ENCODE measurements at regions of chr14 and their contacts with region 1.

Region 1: GRCh38 chr14:52043690-52044089 is 25.2 kb downstream of the NID2 start:
- DNase-seq: peak in 1 of 2 experiments; percentile 72
- H3K4me3 ChIP-seq: no peak overlapping the region
- H3K27ac ChIP-seq: no peak overlapping the region
- H3K4me1 ChIP-seq: peaks cover 0 to 2% (median under 1%) of the 10 kb centered on the region in 4 experiments; a peak in 2 of 7 replicates
- H3K27me3 ChIP-seq: no peaks in the 10 kb centered on the region
- CTCF ChIP-seq: peak; percentile 82 to 95 (median 90)
- EP300 ChIP-seq: no peak
- POLR2A ChIP-seq: no peak
- RAD21 ChIP-seq: peak; percentile 76 to 81

Region 2: DNA sequence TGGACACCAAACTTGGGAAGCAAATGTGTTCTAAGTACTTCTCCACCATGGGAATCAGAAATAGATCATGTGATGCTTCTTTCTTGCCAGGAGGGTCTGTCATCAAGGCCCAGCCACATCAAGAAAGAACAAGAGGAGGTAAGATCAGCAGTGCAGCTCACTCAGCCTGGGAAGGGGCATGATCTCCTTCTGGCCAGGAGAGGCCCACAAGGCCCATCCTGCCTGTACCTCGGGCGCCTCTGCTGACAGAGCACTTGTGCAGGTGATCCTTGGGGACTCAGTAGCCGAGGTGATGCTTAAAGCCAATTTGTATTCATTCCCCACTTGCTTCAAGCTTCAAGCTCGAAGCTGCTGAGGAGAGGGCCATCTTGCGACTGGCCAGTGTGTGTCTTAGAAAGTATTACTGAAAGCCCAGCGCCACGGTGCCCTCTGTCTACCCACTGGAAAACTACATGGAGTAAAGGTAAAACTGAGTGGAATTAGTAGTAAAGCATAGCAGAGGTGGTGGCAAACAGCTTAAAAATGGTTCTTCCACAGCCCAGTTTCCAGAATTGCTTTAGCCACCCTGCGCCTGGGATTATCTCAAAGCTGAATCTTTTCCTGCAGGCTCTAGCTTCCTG is 28.2 kb before region 1 on chr14:
- CTCF ChIA-PET with region 1: interaction called, 33 read pairs
- POLR2A ChIA-PET with region 1: no interaction called
- DNase-seq: peak in 1 of 2 experiments; percentile 61
- H3K4me3 ChIP-seq: no peak overlapping the region
- H3K27ac ChIP-seq: no peak overlapping the region
- H3K4me1 ChIP-seq: peaks cover 2 to 12% (median 11%) of the 10 kb centered on the region in 4 experiments; a peak in 6 of 7 replicates
- H3K27me3 ChIP-seq: no peaks in the 10 kb centered on the region
- CTCF ChIP-seq: peak; percentile 37 to 73 (median 55)
- EP300 ChIP-seq: no peak
- POLR2A ChIP-seq: no peak
- RAD21 ChIP-seq: peak; percentile 52 to 56

Region 3: GRCh38 chr14:52031781-52032180 is 11.9 kb before region 1 on chr14:
- CTCF ChIA-PET with region 1: interaction called, 11 read pairs
- POLR2A ChIA-PET with region 1: interaction called, 3 read pairs
- DNase-seq: no peak
- H3K4me3 ChIP-seq: no peak overlapping the region
- H3K27ac ChIP-seq: no peak overlapping the region
- H3K4me1 ChIP-seq: no peaks in the 10 kb centered on the region; a peak in 1 of 7 replicates
- H3K27me3 ChIP-seq: no peaks in the 10 kb centered on the region
- CTCF ChIP-seq: no peak
- EP300 ChIP-seq: no peak
- POLR2A ChIP-seq: no peak
- RAD21 ChIP-seq: no peak

Region 4: DNA sequence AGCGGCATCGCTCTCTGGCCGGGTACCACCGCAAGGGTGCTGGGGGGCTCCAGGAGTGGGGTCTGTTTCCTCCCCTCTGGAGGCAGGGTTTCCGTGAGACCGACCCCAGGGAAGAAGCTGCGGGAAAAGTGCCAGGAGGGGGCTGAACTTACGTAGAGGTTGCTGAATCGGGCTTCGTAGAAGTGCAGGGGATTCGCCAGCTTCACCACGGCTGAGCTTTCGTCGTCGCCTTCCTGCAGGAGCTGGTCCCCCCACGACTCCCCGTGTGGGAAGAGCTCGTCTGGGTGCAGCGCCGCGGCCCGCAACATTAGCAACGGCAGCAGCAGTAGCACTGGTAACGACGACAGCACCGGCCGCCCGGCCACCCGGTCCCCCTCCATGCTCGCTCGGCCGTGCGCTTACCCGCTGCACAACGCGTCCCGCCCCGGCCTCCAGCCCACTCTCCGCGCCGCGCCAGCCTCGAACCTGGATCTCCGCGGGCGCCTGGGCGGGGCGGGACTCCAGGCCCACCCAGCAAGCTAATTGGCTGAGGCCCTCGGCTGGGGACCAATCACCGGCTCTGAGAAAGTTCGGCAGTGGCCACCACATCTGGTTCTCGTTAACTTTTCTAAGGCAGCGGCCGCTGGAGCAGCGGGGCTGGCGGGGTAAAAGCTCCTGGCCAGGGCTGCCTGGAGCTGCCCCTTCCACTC is 25.1 kb after region 1 on chr14 and contains the start of gene NID2:
- CTCF ChIA-PET with region 1: interaction called, 135 read pairs
- POLR2A ChIA-PET with region 1: interaction called, 5 read pairs
- DNase-seq: peak; percentile 63 to 92
- H3K4me3 ChIP-seq: peak within 1 kb of the TSS; percentile 47 to 84 (median 76)
- H3K27ac ChIP-seq: no peak within 1 kb of the TSS
- H3K4me1 ChIP-seq: peaks cover 0 to 6% (median under 1%) of the 10 kb centered on the region in 4 experiments; a peak in 2 of 7 replicates
- H3K27me3 ChIP-seq: peaks cover 5 to 35% (median 30%) of the 10 kb centered on the region in 4 experiments
- CTCF ChIP-seq: no peak
- EP300 ChIP-seq: no peak
- POLR2A ChIP-seq: no peak; a peak in 1 of 3 replicates
- RAD21 ChIP-seq: no peak
- total RNA-seq, gene NID2: 6.1 and 6.9 TPM in 2 replicates

Region 5: DNA sequence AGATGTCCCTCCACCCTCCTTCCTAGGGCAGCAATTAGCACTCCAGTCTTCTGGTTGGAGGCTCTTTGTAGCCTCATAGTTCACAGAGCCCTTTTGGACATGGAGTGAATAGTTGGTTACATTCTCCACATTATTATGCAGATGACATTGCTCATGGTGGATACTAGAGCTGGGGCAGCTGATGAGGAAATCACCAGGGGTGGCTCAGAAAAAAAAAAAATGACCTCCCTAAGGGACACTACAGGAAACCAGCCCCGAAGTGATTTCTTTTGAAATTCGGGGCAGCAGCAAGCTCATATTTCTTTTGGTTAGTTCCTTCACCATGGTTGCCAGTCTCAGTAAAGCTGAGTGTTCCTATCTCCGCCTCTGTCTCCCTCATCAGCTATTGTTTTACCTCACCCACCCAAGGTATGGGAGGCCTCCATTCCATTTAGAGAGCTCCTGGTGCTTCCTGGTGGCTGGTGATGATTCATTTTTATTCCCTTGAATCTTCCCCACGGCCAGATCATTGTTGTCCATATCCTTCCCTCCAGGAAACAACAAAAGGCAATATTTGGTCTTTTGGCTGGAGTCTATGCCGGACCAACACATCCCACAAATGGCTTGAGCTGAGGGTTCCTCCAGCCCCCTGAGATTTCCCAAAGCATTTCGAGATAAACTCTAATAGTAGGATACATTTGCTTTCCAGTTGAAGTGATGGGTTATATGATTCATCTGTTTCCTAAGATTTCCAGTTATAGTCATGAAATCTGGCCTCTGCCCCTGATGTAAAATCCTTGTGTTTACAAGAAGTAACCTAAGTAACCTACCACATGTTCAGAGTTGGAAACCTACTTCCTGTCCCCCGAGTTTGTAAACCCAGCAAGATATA is 81.3 kb after region 1 on chr14:
- CTCF ChIA-PET with region 1: interaction called, 13 read pairs
- POLR2A ChIA-PET with region 1: no interaction called
- DNase-seq: peak in 1 of 2 experiments; percentile 19
- H3K4me3 ChIP-seq: no peak overlapping the region
- H3K27ac ChIP-seq: no peak overlapping the region
- H3K4me1 ChIP-seq: peaks cover 0 to 9% (median 0%) of the 10 kb centered on the region in 4 experiments; a peak in 3 of 7 replicates
- H3K27me3 ChIP-seq: no peaks in the 10 kb centered on the region
- CTCF ChIP-seq: no peak
- EP300 ChIP-seq: no peak
- POLR2A ChIP-seq: no peak
- RAD21 ChIP-seq: no peak

Region 6: GRCh38 chr14:52253503-52253902 is 209.8 kb after region 1 on chr14:
- CTCF ChIA-PET with region 1: no interaction called
- POLR2A ChIA-PET with region 1: no interaction called
- DNase-seq: no peak
- H3K4me3 ChIP-seq: no peak overlapping the region; a peak in 1 of 8 replicates
- H3K27ac ChIP-seq: no peak overlapping the region
- H3K4me1 ChIP-seq: peaks cover 0 to 9% (median 6%) of the 10 kb centered on the region in 4 experiments; a peak in 6 of 7 replicates
- H3K27me3 ChIP-seq: no peaks in the 10 kb centered on the region
- CTCF ChIP-seq: no peak
- EP300 ChIP-seq: no peak
- POLR2A ChIP-seq: no peak
- RAD21 ChIP-seq: no peak